ENCODE measurements at regions of chr16 and their contacts with region 1.

Region 1: GRCh38 chr16:19886073-19886941 is 1.7 kb upstream of the GPRC5B start:
- DNase-seq: peak; percentile 89
- H3K4me3 Mint-ChIP-seq: peak overlapping the region; percentile 57
- H3K27ac Mint-ChIP-seq: no peak overlapping the region
- H3K4me1 Mint-ChIP-seq: peaks cover 19% of the 10 kb centered on the region
- H3K27me3 Mint-ChIP-seq: peaks cover 32% of the 10 kb centered on the region

Region 2: DNA sequence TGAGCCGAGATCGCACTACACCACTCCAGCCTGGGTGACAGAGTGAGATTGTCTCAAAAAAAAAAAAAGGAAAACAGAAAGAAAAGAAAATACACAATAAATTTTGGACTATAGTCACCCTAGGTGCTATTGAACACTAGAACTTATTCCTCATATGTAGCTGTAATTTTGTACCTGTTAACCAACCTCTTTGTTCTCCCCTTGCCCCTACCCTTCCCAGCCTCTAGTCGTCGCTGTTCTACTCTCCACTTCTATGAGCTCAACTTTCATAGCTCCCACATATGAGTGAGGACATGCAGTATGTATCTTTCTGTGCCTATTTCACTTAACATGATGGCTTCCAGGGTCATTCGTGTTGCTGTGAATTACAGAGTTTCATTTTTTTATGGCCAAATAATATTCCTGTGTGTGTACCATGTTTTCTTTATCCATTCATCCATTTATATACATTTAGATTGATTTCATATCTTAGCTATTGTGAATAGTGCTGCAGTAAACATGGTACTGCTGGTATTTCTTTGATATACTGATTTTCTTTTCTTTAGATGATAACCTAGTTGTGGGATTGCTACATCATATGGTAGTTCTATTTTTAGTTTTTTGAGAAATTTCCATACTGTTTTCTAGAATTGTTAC is 302.5 kb before region 1 on chr16:
- CTCF ChIA-PET with region 1: interaction called, 17 read pairs
- POLR2A ChIA-PET with region 1: no interaction called
- intact Hi-C with region 1: loop called (anchors 1 kb)
- DNase-seq: peak; percentile 32
- H3K4me3 Mint-ChIP-seq: no peak overlapping the region
- H3K27ac Mint-ChIP-seq: no peak overlapping the region
- H3K4me1 Mint-ChIP-seq: peaks cover 9% of the 10 kb centered on the region
- H3K27me3 Mint-ChIP-seq: no peaks in the 10 kb centered on the region

Region 3: DNA sequence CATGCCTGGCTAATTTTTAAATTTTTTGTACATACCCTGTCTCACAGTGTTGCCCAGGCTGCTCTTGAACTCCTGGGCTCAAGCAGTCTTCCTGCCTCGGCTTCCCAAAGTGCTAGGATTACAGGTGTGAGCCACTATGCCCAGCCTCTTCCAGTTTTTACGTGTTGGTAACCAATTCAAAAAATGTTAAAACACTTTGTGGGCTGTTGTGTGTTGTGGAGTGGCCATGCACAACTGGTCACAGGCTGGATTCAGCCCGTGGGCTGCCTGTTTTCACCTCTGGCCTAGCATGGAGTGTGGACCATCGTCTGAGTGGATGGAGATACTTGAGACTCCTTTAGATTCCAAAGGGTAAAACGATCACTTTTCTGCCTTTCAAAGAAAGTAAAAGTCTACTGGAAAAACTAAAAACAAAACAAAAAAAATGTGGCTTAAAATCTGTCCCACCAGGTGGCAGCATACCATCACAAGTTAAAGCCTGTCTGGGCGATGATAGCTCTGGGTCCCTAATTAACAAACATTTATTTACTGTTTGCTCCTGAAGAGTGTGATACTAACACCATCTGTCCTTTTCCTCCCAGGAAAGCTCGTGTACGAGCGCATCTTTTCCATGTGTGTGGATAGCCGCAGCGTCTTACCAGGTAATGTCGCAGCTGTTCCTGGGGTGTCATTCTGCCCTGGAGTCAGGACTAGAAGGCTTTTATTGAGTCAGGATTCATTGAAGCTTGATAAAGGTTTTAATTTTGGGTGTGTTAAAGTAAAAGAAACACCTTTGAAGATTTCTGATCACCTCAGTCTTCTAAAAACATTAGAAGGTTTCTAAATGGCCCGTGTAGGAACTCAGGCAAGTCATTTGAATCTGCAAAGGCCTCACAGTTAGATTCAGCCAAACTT is 285.0 kb before region 1 on chr16:
- CTCF ChIA-PET with region 1: interaction called, 28 read pairs
- POLR2A ChIA-PET with region 1: no interaction called
- intact Hi-C with region 1: loop called (anchors 1 kb)
- DNase-seq: peak; percentile 25
- H3K4me3 Mint-ChIP-seq: no peak overlapping the region
- H3K27ac Mint-ChIP-seq: no peak overlapping the region
- H3K4me1 Mint-ChIP-seq: peaks cover 1% of the 10 kb centered on the region
- H3K27me3 Mint-ChIP-seq: no peaks in the 10 kb centered on the region

Region 4: GRCh38 chr16:19717771-19718602 is 168.3 kb before region 1 on chr16 and contains the starts of genes IQCK and KNOP1:
- CTCF ChIA-PET with region 1: interaction called, 6 read pairs
- POLR2A ChIA-PET with region 1: no interaction called
- intact Hi-C with region 1: loop called (anchors 10 kb)
- DNase-seq: peak; percentile 93
- H3K4me3 Mint-ChIP-seq: peak within 1 kb of the TSS; percentile 92
- H3K27ac Mint-ChIP-seq: peak within 1 kb of the TSS; percentile 79
- H3K4me1 Mint-ChIP-seq: peaks cover 27% of the 10 kb centered on the region
- H3K27me3 Mint-ChIP-seq: no peaks in the 10 kb centered on the region
- total RNA-seq, gene IQCK: 2.2 to 3.0 TPM
- total RNA-seq, gene KNOP1: 24.3 to 26.4 TPM

Region 5: GRCh38 chr16:19907161-19907992 is 21.1 kb after region 1 on chr16:
- CTCF ChIA-PET with region 1: interaction called, 11 read pairs
- POLR2A ChIA-PET with region 1: no interaction called
- intact Hi-C with region 1: no loop called
- DNase-seq: peak; percentile 81
- H3K4me3 Mint-ChIP-seq: no peak overlapping the region
- H3K27ac Mint-ChIP-seq: no peak overlapping the region
- H3K4me1 Mint-ChIP-seq: peaks cover 2% of the 10 kb centered on the region
- H3K27me3 Mint-ChIP-seq: peaks cover 4% of the 10 kb centered on the region

Region 6: GRCh38 chr16:19926449-19927390 is 40.4 kb after region 1 on chr16:
- CTCF ChIA-PET with region 1: no interaction called
- POLR2A ChIA-PET with region 1: no interaction called
- intact Hi-C with region 1: no loop called
- DNase-seq: no peak
- H3K4me3 Mint-ChIP-seq: no peak overlapping the region
- H3K27ac Mint-ChIP-seq: no peak overlapping the region
- H3K4me1 Mint-ChIP-seq: no peaks in the 10 kb centered on the region
- H3K27me3 Mint-ChIP-seq: peaks cover 4% of the 10 kb centered on the region